GM10248 (cell line): ENCODE measurements at regions of chr1 and their contacts with region 1.

Region 1: DNA sequence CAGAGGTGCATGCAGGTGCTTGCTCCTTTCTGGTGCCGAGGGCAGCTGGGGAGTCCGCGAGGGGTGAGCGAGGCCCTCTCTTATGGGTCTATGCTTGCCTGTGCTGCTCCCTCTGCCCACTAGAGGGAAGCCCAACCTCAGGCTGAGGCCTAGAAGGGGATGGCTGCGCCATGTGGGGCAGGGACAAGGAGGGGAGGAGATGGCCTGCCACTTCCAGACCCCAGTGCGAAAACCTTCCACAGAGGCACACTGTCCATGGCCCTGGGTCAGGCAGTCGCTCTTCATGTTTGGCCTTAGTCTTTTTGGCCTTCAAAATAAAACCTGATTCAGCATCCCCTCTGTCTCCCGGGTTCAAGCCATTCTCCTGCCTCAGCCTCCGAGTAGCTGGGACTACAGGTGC is 14.0 kb downstream of the RHBG start:
- DNase-seq: peak; percentile 87
- CTCF ChIP-seq: peak; percentile 97

Region 2: DNA sequence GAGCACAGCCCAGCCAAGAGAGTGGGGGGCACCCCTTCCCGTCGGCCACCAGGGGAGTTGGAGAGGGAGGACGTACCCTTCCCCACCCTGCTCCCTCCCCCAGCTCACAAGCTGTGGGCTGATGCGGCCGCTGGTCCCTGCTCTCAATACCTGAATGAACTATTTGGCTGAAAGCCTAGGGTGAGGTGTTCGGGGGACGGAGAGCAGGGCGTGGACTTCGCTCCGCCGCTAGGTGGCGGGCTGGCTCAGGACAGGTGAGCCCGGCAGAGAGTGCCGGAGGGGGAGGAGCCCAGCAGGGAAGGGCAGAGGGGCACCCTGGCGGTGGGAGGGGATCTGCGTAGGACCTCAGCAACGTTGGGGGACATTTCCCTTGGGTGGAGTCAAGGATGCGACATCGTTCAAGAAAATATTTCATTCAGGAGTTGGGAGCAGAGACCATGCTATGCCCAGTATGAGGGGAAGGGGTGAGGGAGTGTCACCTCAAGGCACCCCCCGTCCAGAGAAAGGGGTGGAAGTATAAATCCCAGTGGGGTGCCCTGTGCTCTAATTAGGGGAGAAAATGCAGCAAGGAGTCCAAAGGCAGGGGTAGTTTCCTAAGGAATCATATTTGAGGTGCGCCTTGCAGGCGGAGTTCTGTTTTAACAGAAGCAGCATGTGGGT is 26.0 kb before region 1 on chr1:
- CTCF ChIA-PET with region 1: interaction called, 55 read pairs
- POLR2A ChIA-PET with region 1: no interaction called
- DNase-seq: peak; percentile 88
- CTCF ChIP-seq: peak; percentile 79

Region 3: GRCh38 chr1:156394835-156395461 is 11.9 kb after region 1 on chr1:
- CTCF ChIA-PET with region 1: interaction called, 88 read pairs
- POLR2A ChIA-PET with region 1: no interaction called
- DNase-seq: no peak
- CTCF ChIP-seq: no peak

Region 4: GRCh38 chr1:156414461-156415064 is 31.5 kb after region 1 on chr1:
- CTCF ChIA-PET with region 1: interaction called, 88 read pairs
- POLR2A ChIA-PET with region 1: no interaction called
- DNase-seq: no peak
- CTCF ChIP-seq: no peak

Region 5: GRCh38 chr1:156435545-156436141 is 52.6 kb after region 1 on chr1:
- CTCF ChIA-PET with region 1: interaction called, 130 read pairs
- POLR2A ChIA-PET with region 1: no interaction called
- DNase-seq: peak; percentile 45
- CTCF ChIP-seq: no peak

Region 6: GRCh38 chr1:156524481-156524869 is 141.5 kb after region 1 on chr1:
- CTCF ChIA-PET with region 1: interaction called, 15 read pairs
- POLR2A ChIA-PET with region 1: no interaction called
- DNase-seq: peak; percentile 44
- CTCF ChIP-seq: no peak

Region 7: GRCh38 chr1:156625436-156626078 is 242.5 kb after region 1 on chr1:
- CTCF ChIA-PET with region 1: interaction called, 10 read pairs
- POLR2A ChIA-PET with region 1: no interaction called
- DNase-seq: peak; percentile 69
- CTCF ChIP-seq: peak; percentile 83